ENCODE measurements at regions of chr1 and their contacts with region 1.

Region 1: DNA sequence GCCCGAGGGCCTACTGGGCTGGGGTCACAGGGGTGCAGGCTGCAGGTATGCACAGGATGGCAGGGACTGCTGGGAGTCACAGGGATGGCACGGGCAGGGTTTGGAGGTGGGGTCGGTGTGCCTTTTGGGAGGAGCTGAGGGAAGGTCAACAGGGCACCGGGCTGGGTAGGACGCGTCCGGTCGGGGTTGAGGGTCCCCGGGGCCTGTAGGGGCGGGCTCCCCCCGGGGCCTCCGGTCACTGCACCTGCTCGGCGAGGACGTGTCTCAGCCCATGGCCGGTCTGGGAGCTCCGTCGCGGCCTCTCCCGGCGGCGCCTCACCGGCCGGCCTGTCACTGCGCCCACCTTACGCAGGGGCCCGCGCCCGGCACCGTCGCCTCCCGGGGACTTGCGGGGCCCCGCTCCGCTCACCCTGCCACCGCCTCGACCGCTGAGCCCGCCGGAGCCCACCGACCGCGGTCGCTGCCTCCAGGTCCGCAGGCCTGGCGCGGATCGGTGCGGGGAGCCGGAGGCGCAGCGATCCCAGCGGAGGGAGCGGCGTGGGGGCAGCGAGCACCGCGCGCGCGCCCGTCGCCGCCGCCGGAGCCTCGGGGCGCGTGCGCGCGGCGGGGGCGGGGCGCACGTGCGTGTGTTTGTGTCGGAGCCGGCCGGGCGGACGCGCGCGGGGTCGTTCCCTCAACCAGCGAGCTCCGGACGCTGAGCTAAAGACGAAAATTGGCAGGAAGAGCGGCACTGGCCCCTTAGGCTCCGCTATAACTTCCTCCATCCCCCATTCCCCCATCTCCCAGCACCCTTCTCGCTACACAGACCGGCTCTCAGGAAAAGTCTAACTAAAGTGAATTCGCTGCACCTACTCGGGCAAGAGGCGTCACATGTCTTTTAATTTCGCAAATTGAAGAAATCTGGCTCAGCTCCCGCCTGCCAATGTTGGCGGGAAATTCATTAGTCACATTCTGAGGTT is at the start of gene AMIGO1:
- DNase-seq: peak; percentile 71
- ATAC-seq: peak; percentile 71
- H3K4me3 Mint-ChIP-seq: peak within 1 kb of the TSS; percentile 78
- H3K27ac Mint-ChIP-seq: peak within 1 kb of the TSS; percentile 84
- H3K4me1 Mint-ChIP-seq: peaks cover 53% of the 10 kb centered on the region
- H3K27me3 Mint-ChIP-seq: no peaks in the 10 kb centered on the region
- CTCF ChIP-seq: no peak
- total RNA-seq, gene AMIGO1: 1.3 to 1.7 TPM

Region 2: DNA sequence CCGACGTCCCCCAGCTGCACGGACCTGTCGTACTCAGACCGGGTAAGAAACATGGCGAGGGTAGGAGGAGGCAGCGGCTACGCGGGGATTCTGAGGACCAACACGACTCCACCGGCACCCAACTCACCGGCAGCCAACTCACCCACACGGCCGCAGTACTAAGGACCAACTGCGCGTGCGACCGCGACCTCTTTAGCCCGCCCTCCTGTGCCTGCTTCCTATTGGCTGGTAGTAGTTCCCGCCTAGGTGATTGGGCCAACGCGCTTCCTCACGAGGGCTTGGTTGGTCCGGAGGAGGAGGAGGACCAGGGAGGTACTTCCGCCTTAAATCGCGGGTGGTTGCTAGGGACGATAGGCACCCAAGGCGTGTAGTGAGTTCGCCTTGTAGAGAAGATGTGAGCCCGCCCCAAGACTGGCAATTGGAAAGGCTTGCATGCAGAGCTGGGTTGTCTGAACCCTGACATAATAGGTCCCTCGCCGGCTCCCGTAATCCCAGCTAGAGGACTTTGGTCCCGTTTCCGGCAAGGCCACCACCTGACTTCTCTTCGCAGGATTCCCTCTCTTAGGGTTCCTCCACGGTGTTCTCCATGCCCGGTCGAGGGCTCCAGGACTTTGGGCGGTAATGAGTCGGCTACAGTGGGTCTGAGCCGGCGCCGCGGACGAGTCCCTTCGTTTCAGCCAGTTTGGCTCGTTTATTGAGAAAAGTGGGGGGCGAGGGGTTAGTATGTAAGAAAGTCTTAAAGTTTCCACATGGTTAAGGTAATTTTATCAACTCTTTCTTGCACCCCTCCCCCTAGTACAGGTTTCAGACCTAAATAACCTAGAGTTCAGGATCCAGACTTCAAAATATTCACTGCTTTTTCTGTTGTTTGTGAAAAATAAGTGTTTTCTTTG is 82.9 kb before region 1 on chr1 and contains the start of gene PSMA5:
- CTCF ChIA-PET with region 1: interaction called, 5 read pairs
- POLR2A ChIA-PET with region 1: interaction called, 13 read pairs
- intact Hi-C with region 1: no loop called
- DNase-seq: peak; percentile 98
- ATAC-seq: peak; percentile 94
- H3K4me3 Mint-ChIP-seq: peak within 1 kb of the TSS; percentile 93
- H3K27ac Mint-ChIP-seq: peak within 1 kb of the TSS; percentile 96
- H3K4me1 Mint-ChIP-seq: peaks cover 28% of the 10 kb centered on the region
- H3K27me3 Mint-ChIP-seq: no peaks in the 10 kb centered on the region
- CTCF ChIP-seq: no peak
- total RNA-seq, gene PSMA5: 192 to 210 TPM

Measured in activated CD8-positive, alpha-beta T cell treated with anti-CD3 and anti-CD28 coated beads for 36 hours (primary cell).